Activated T-helper 1 cell treated with anti-CD3 and anti-CD28 coated beads, Interleukin-12 subunit alpha, Interleukin-12 subunit beta, Interleukin-2, Interleukin-4 antibody, amounts not matched to agents 30 ng/mL and 10 ng/mL and 1 ng/mL, durations not matched to agents 14 hours and 24 hours and 36 hours (primary cell): ENCODE measurements at regions of chr10 and their contacts with region 1.

Region 1: DNA sequence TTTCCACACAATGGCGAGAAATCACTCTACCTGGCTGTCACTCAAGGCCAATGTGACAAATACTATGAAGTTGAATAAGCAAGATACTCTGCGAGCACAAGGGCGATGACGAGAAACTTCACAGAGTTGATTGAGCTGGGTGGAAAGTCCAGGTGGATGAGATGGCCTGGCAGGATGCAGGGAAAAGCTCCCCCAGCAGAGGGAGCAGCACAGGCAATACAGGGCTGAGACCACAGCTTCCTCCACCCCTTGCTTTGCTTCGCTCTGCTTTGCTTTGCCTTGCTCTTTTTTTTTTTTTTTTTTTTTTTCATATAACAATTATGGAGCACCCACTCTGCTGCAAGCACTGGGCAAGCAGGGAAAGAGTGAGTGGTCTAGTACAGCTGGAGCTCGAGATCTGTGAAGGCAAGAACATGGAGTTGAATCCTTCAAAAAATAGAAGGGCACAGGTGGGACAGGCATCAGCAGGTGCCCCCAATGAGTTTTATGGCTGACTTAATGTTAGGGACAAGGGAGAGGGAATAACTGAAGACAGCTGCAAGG is 88.3 kb downstream of the CABCOCO1 start:
- DNase-seq: peak; percentile 53
- H3K4me3 Mint-ChIP-seq: no peak overlapping the region
- H3K27ac Mint-ChIP-seq: peak overlapping the region; percentile 35
- H3K4me1 Mint-ChIP-seq: peaks cover 23% of the 10 kb centered on the region
- H3K27me3 Mint-ChIP-seq: no peaks in the 10 kb centered on the region

Region 2: DNA sequence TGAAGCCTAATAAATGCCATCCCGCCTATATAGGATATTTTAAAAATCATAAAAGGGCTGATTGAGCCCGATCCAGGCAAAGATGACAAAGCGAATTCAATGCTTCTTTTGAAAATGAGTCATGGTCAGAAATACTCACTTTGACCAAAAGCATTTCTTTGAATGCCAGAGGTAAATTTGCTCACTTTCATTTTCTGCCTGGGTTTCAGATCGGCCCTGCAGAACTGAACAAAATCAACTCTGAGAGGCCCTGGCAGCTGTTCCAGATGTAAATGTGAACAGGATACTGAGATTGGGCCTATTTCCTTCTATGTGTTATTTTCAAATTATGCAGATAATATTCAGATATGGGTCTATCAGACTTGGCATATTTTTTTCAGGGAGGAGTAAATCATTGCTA is 35.7 kb after region 1 on chr10:
- intact Hi-C with region 1: loop called (anchors 1 kb)
- DNase-seq: no peak
- H3K4me3 Mint-ChIP-seq: no peak overlapping the region
- H3K27ac Mint-ChIP-seq: no peak overlapping the region
- H3K4me1 Mint-ChIP-seq: peaks cover 51% of the 10 kb centered on the region
- H3K27me3 Mint-ChIP-seq: no peaks in the 10 kb centered on the region

Region 3: GRCh38 chr10:61835069-61835945 is 84.3 kb after region 1 on chr10:
- intact Hi-C with region 1: loop called (anchors 1 kb)
- DNase-seq: no peak
- H3K4me3 Mint-ChIP-seq: no peak overlapping the region
- H3K27ac Mint-ChIP-seq: no peak overlapping the region
- H3K4me1 Mint-ChIP-seq: peaks cover 13% of the 10 kb centered on the region
- H3K27me3 Mint-ChIP-seq: no peaks in the 10 kb centered on the region

Region 4: DNA sequence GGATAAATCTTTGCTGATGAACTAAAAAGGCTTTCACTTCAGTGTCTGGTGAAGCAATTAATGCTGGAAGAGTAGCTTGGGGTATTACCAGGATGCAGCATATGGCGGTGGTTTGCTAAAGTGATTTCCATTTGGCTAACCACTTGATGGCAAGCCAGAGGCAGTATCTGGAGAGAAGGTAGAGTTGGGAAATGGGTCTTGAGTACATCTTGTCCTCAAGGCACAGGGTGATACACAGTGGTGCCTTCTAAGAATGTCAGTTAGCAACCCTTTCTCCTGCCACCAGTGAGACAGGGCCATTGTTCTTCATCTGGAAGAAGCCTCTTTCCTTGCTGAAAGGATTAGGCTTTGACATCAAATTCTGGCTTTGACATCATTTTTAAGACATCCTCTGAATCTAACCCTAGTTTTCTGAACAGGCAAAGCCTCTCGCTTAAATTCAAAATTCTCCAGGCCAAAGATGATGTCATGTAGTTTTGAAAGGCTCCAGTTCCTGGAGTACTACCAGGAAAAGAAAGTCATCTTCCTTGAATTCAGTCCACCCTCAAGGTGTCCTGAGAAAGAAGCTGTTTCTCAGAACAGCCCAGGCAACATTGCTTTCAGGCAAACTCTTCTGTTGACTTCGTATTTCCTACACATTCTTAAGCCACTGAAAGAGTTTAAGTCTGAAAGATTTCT is 312.9 kb after region 1 on chr10:
- intact Hi-C with region 1: no loop called
- DNase-seq: no peak
- H3K4me3 Mint-ChIP-seq: peak overlapping the region; percentile 61
- H3K27ac Mint-ChIP-seq: peak overlapping the region; percentile 85
- H3K4me1 Mint-ChIP-seq: peaks cover 81% of the 10 kb centered on the region
- H3K27me3 Mint-ChIP-seq: no peaks in the 10 kb centered on the region